ENCODE measurements at regions of chr2 and their contacts with region 1.

Region 1: GRCh38 chr2:241271641-241272297 is 43.7 kb downstream of the HDLBP start:
- DNase-seq: peak; percentile 94
- H3K4me3 ChIP-seq: peak overlapping the region; percentile 76 to 97 (median 84)
- H3K27ac ChIP-seq: peak overlapping the region; percentile 55 to 93 (median 86)
- H3K4me1 ChIP-seq: peaks cover 10 to 65% (median 45%) of the 10 kb centered on the region in 6 donors
- H3K27me3 ChIP-seq: no peaks in the 10 kb centered on the region
- CTCF ChIP-seq: no peak
- POLR2A ChIP-seq: no peak

Region 2: GRCh38 chr2:241339839-241340630 is 68.3 kb after region 1 on chr2:
- intact Hi-C with region 1: loop called (anchors 10 kb)
- DNase-seq: no peak
- H3K4me3 ChIP-seq: no peak overlapping the region
- H3K27ac ChIP-seq: peak overlapping the region in 3 of 8 donors; percentile 1 to 45 (median 32)
- H3K4me1 ChIP-seq: peaks cover 0 to 39% (median 12%) of the 10 kb centered on the region in 6 donors
- H3K27me3 ChIP-seq: no peaks in the 10 kb centered on the region
- CTCF ChIP-seq: no peak
- POLR2A ChIP-seq: no peak

Measured in spleen (tissue), 13 donors.